AG04449 (cell line): ENCODE measurements at regions of chr12 and their contacts with region 1.

Region 1: GRCh38 chr12:53065975-53066931 is 12.9 kb downstream of the SPRYD3 start:
- DNase-seq: no peak
- H3K4me3 ChIP-seq: no peak overlapping the region
- CTCF ChIP-seq: peak; percentile 85

Region 2: GRCh38 chr12:52949413-52950331 is 116.6 kb before region 1 on chr12:
- CTCF ChIA-PET with region 1: no interaction called
- POLR2A ChIA-PET with region 1: no interaction called
- DNase-seq: no peak
- H3K4me3 ChIP-seq: peak overlapping the region; percentile 78
- CTCF ChIP-seq: no peak

Region 3: DNA sequence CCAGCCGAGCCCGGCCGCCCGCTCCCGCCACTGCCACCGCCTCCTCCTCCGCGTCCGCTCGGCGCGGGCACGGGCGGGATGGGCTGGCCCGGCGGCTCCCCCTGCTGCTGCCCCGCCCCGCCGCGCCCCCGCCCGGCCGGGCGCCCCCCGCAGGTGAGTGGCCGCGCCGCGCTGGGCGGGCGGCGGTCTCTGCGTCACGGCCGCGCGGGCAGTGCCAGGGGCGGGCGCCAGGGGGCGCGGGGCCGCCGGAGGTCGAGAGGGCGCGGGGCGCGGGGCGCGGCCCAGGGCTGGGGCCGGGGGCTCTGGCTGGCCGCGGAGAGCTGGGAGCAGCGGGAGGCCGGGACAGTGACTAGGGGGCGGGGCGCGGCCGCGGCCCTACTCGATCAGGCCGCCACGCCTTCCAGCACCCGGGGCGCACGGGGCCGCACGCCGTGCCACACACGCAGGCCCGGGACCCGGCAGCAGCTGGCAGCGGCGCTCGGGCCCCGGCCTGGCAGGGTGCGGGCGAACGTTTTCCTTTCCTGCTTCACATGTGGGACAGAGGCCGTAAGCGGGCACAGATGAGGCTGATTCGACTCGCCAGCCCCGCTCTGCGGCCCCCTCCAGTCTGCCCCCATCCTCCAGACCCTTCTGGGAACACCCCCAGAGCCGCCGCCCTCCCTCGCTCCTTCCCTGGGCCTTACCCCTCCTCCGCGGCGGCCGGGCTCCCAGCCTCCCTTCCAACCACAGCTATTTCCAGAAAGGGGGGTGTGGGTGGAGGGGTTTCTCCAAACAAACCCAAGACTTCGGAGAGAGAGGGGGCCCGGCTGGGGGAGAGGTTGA is 18.8 kb before region 1 on chr12:
- CTCF ChIA-PET with region 1: interaction called, 143 read pairs
- POLR2A ChIA-PET with region 1: interaction called, 19 read pairs
- DNase-seq: no peak
- H3K4me3 ChIP-seq: peak overlapping the region; percentile 83
- CTCF ChIP-seq: peak; percentile 19

Region 4: GRCh38 chr12:53079226-53080117 is 13.2 kb after region 1 on chr12 and contains the start of gene SPRYD3:
- CTCF ChIA-PET with region 1: interaction called, 130 read pairs
- POLR2A ChIA-PET with region 1: interaction called, 67 read pairs
- DNase-seq: peak; percentile 80
- H3K4me3 ChIP-seq: peak within 1 kb of the TSS; percentile 76
- CTCF ChIP-seq: no peak

Region 5: DNA sequence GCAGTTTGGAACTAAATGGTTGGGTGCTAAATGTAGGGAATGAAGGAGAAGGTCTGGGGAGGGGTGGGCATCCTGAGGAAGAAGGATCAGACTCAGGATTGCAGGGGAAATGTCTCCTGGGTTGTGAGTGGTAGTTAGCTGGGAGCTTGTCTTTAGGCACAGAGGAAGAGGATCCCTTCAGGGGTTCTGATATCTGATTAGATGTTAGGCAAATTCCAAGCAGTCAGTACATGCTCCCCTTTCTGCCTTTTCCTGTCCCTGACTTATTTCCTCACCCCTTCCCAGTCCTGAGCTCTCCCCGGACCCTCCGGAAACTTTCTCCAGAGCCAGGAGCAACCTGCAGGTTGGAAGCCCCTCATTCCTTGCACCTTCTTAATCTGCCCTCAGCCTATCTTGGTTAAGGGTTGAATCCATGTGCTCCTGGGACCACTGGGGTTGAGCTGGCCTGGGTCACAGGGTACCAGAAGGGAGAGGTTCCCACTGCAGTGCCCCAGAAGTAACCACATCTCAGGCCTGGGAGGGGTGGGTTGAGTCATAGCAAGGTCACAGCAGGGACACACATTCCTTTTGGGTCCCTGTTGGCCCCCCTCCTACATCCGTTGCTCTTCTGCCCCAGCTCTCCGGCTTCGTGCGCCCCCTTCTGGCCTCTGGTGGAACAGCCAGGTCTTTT is 32.9 kb after region 1 on chr12:
- CTCF ChIA-PET with region 1: interaction called, 655 read pairs
- POLR2A ChIA-PET with region 1: interaction called, 74 read pairs
- DNase-seq: peak; percentile 88
- H3K4me3 ChIP-seq: peak overlapping the region; percentile 73
- CTCF ChIP-seq: peak; percentile 92

Region 6: GRCh38 chr12:53171725-53172329 is 105.6 kb after region 1 on chr12:
- CTCF ChIA-PET with region 1: interaction called, 11 read pairs
- POLR2A ChIA-PET with region 1: no interaction called
- DNase-seq: no peak
- H3K4me3 ChIP-seq: no peak overlapping the region
- CTCF ChIP-seq: no peak

Region 7: GRCh38 chr12:53190108-53190729 is 124.0 kb after region 1 on chr12:
- CTCF ChIA-PET with region 1: interaction called, 108 read pairs
- POLR2A ChIA-PET with region 1: interaction called, 4 read pairs
- DNase-seq: no peak
- H3K4me3 ChIP-seq: no peak overlapping the region
- CTCF ChIP-seq: peak; percentile 92

Region 8: GRCh38 chr12:53344824-53345485 is 278.7 kb after region 1 on chr12:
- CTCF ChIA-PET with region 1: interaction called, 11 read pairs
- POLR2A ChIA-PET with region 1: no interaction called
- DNase-seq: no peak
- H3K4me3 ChIP-seq: peak overlapping the region; percentile 70
- CTCF ChIP-seq: peak; percentile 89